ENCODE measurements at regions of chr4 and their contacts with region 1.

Region 1: DNA sequence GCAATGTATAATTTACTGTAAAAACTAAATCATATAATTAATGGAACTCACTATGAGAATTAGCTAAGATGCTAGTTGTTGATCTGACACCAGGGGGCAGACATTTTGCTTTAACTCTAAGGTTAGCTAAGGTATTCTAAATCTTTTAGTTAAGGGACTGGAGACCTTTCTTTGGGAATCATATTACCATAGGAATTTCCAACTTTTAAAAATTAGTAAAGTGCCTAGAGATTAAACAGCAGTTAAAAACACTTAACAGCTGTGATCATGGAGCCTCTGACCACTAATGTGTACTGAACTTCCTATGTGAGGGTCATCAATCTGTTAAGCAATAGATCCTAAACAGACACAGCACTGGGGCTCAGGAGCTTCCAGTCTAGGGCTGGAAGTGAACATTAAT is 226.6 kb downstream of the NSUN7 start:
- DNase-seq: no peak
- ATAC-seq: peak; percentile 80
- H3K4me3 ChIP-seq: no peak overlapping the region
- H3K27ac ChIP-seq: no peak overlapping the region
- H3K4me1 ChIP-seq: no peaks in the 10 kb centered on the region
- H3K27me3 ChIP-seq: no peaks in the 10 kb centered on the region
- CTCF ChIP-seq: peak; percentile 48 to 62 (median 59); a peak in 5 of 6 replicates
- EP300 ChIP-seq: no peak
- POLR2A ChIP-seq: no peak
- RAD21 ChIP-seq: peak; percentile 72

Region 2: DNA sequence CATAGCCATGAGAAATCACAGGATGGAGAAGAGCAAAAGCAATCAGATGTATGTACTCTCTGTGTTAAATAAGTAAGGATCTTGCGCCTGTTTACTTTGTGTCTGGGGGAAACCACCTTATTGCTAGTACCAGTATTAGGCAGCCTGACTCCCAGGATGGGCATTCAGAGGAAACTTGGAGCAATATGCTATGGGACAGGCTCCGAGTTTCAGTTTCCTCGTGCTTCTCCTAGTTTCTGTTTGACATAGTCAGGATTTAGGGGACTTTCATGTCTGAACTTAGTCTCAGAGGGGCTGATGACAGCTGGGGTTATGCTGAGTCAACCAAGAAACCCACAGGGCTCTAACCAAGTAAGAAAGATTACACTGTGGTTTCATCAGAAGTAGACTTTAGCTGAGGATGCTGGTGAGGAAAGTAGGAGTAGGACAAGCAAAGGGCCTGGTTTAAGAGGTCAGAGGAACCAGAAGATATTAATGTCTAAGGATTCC is 213.1 kb before region 1 on chr4:
- CTCF ChIA-PET with region 1: no interaction called
- POLR2A ChIA-PET with region 1: no interaction called
- RAD21 ChIA-PET with region 1: no interaction called
- SMC1A ChIA-PET with region 1: no interaction called
- in situ Hi-C with region 1: no loop called
- intact Hi-C with region 1: no loop called
- DNase-seq: peak; percentile 88
- ATAC-seq: peak; percentile 100
- H3K4me3 ChIP-seq: no peak overlapping the region
- H3K27ac ChIP-seq: 0 out of 2 replicates have a peak overlapping the region, but pooled peaks have one; percentile 20
- H3K4me1 ChIP-seq: peaks cover 14% of the 10 kb centered on the region
- H3K27me3 ChIP-seq: no peaks in the 10 kb centered on the region
- CTCF ChIP-seq: no peak
- EP300 ChIP-seq: peak in 1 of 2 experiments; percentile 82; a peak in 3 of 4 replicates
- POLR2A ChIP-seq: no peak
- RAD21 ChIP-seq: no peak

Region 3: GRCh38 chr4:40940317-40940741 is 36.0 kb before region 1 on chr4:
- CTCF ChIA-PET with region 1: interaction called, 14 read pairs
- POLR2A ChIA-PET with region 1: no interaction called
- RAD21 ChIA-PET with region 1: interaction called, 4 read pairs
- SMC1A ChIA-PET with region 1: interaction called, 7 read pairs
- in situ Hi-C with region 1: no loop called
- intact Hi-C with region 1: no loop called
- DNase-seq: no peak
- ATAC-seq: no peak
- H3K4me3 ChIP-seq: no peak overlapping the region
- H3K27ac ChIP-seq: no peak overlapping the region
- H3K4me1 ChIP-seq: no peaks in the 10 kb centered on the region
- H3K27me3 ChIP-seq: no peaks in the 10 kb centered on the region; a peak in 1 of 4 replicates
- CTCF ChIP-seq: no peak
- EP300 ChIP-seq: no peak
- POLR2A ChIP-seq: no peak
- RAD21 ChIP-seq: no peak

Region 4: GRCh38 chr4:40962551-40963180 is 13.7 kb before region 1 on chr4:
- CTCF ChIA-PET with region 1: interaction called, 14 read pairs
- POLR2A ChIA-PET with region 1: no interaction called
- RAD21 ChIA-PET with region 1: interaction called, 3 read pairs
- SMC1A ChIA-PET with region 1: interaction called, 6 read pairs
- in situ Hi-C with region 1: no loop called
- intact Hi-C with region 1: no loop called
- DNase-seq: no peak
- ATAC-seq: no peak
- H3K4me3 ChIP-seq: no peak overlapping the region
- H3K27ac ChIP-seq: no peak overlapping the region
- H3K4me1 ChIP-seq: no peaks in the 10 kb centered on the region
- H3K27me3 ChIP-seq: no peaks in the 10 kb centered on the region
- CTCF ChIP-seq: no peak
- EP300 ChIP-seq: no peak
- POLR2A ChIP-seq: no peak
- RAD21 ChIP-seq: no peak

Region 5: DNA sequence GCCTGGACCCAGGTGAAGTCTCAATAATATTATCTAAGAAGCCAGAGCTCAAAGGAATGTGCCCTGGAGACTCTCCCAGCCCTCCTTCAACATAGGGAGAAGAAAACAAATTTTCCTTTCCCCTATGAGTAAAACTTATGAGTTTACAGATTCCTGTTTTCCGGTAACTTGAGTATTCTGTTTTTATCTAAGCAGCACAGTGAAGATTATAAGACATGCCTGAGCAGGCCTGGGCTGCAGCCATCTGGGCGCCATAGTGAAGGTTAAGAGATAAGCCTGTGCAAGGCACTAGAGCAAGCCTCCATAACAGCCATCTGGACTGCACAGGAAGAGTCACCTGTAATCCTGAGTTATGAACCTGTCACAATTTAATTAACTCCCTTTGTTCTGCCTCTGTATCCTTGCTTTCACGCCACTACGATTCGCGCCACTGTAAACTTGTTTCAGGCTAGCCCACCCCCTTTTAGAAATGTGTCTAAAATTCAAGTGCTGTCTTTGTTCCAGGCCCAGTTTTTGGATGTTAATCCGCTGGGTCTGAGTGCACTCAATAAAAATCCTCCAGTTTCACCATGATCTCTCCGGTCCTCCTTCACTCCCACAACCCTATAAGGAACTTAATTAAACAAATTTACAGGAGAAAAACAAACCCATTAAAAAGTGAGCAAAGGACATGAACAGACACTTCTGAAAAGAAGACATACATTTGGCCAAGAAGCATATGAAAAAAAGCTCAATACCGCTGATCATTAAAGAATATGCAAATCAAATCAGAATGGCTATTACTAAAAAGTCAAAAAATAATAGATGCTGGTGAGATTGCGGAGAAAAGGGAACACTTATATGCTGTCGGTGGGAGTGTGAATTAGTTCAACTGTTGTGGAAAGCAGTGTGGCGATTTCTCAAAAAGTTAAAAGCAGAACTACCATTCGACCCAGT is 48.5 kb after region 1 on chr4:
- CTCF ChIA-PET with region 1: interaction called, 10 read pairs
- POLR2A ChIA-PET with region 1: no interaction called
- RAD21 ChIA-PET with region 1: no interaction called
- SMC1A ChIA-PET with region 1: interaction called, 3 read pairs
- in situ Hi-C with region 1: no loop called
- intact Hi-C with region 1: no loop called
- DNase-seq: no peak
- ATAC-seq: no peak
- H3K4me3 ChIP-seq: no peak overlapping the region
- H3K27ac ChIP-seq: no peak overlapping the region
- H3K4me1 ChIP-seq: no peaks in the 10 kb centered on the region
- H3K27me3 ChIP-seq: no peaks in the 10 kb centered on the region
- CTCF ChIP-seq: no peak
- EP300 ChIP-seq: no peak
- POLR2A ChIP-seq: no peak
- RAD21 ChIP-seq: no peak

Region 6: GRCh38 chr4:41120297-41121217 is 144.2 kb after region 1 on chr4:
- CTCF ChIA-PET with region 1: interaction called, 22 read pairs
- POLR2A ChIA-PET with region 1: no interaction called
- RAD21 ChIA-PET with region 1: interaction called, 3 read pairs
- SMC1A ChIA-PET with region 1: interaction called, 5 read pairs
- in situ Hi-C with region 1: no loop called
- intact Hi-C with region 1: no loop called
- DNase-seq: no peak
- ATAC-seq: no peak
- H3K4me3 ChIP-seq: no peak overlapping the region
- H3K27ac ChIP-seq: no peak overlapping the region
- H3K4me1 ChIP-seq: no peaks in the 10 kb centered on the region
- H3K27me3 ChIP-seq: no peaks in the 10 kb centered on the region
- CTCF ChIP-seq: no peak
- EP300 ChIP-seq: no peak
- POLR2A ChIP-seq: no peak
- RAD21 ChIP-seq: no peak

Region 7: GRCh38 chr4:41196633-41197332 is 220.4 kb after region 1 on chr4:
- CTCF ChIA-PET with region 1: interaction called, 14 read pairs
- POLR2A ChIA-PET with region 1: no interaction called
- RAD21 ChIA-PET with region 1: interaction called, 3 read pairs
- SMC1A ChIA-PET with region 1: interaction called, 11 read pairs
- in situ Hi-C with region 1: no loop called
- intact Hi-C with region 1: no loop called
- DNase-seq: no peak
- ATAC-seq: no peak
- H3K4me3 ChIP-seq: no peak overlapping the region
- H3K27ac ChIP-seq: no peak overlapping the region
- H3K4me1 ChIP-seq: peaks cover 22% of the 10 kb centered on the region
- H3K27me3 ChIP-seq: no peaks in the 10 kb centered on the region
- CTCF ChIP-seq: no peak
- EP300 ChIP-seq: no peak
- POLR2A ChIP-seq: no peak
- RAD21 ChIP-seq: no peak

Region 8: DNA sequence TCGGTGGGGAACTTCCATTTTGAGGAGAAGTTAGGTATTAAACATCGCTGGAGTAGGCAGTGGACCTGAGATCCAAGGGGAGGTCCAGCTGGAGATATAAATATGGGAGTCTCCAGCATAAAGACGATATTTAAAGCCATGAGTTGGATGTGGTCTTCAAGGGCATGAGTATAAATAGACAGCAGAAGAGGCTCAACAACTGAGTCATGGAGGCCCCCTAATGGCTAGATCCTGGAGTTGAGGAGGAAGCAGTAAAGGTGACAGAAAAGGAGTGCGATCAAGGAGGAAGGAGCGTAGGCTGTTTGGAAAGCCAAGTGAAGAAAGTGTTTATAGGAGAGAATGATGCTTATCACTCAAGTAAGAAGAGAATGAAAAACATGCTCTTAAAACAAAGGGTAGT is 256.1 kb after region 1 on chr4:
- CTCF ChIA-PET with region 1: interaction called, 15 read pairs
- POLR2A ChIA-PET with region 1: no interaction called
- RAD21 ChIA-PET with region 1: interaction called, 4 read pairs
- SMC1A ChIA-PET with region 1: interaction called, 9 read pairs
- in situ Hi-C with region 1: no loop called
- intact Hi-C with region 1: no loop called
- DNase-seq: no peak
- ATAC-seq: no peak
- H3K4me3 ChIP-seq: no peak overlapping the region
- H3K27ac ChIP-seq: no peak overlapping the region
- H3K4me1 ChIP-seq: no peaks in the 10 kb centered on the region
- H3K27me3 ChIP-seq: no peaks in the 10 kb centered on the region
- CTCF ChIP-seq: peak in 2 of 3 experiments; percentile 4 to 10; a peak in 1 of 6 replicates
- EP300 ChIP-seq: no peak
- POLR2A ChIP-seq: no peak
- RAD21 ChIP-seq: peak; percentile 36; the same call in 1 of the 2 replicates